Endothelial cell of umbilical vein (primary cell): ENCODE measurements at regions of chr3 and their contacts with region 1.

Region 1: DNA sequence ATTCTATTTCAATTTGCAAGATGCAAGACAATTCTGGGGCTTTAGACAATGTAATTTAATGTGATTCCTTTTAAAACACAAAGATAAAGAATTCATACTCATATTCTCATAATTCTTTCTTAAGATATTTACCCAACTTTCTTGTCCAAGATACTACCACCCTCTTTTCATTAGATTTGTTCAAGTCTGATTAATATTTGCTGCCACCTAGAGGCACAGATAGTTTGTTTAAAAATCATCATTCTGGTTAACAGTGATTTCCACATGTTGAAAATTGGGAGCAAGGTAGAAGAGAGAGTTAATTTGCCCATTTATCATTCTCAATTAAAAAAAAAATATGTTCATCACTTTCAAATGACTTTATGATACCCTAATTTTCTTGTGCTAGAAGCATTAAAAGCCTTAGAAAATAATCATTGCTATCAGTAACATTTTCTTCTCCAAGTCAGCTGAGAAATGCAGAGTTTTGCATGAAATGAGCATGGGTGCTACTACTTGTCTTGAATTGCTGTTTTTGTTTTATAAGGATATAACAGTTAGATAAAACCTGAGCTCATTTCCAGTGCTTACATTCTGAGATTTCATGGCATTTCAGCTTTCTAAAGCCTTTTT is 11.6 kb downstream of the TAMM41 start:
- DNase-seq: peak; percentile 49
- H3K4me3 ChIP-seq: no peak overlapping the region
- H3K27ac ChIP-seq: no peak overlapping the region
- H3K4me1 ChIP-seq: no peaks in the 10 kb centered on the region
- H3K27me3 ChIP-seq: no peaks in the 10 kb centered on the region
- CTCF ChIP-seq: peak; percentile 17 to 30
- POLR2A ChIP-seq: no peak

Region 2: GRCh38 chr3:11651900-11652299 is 183.2 kb before region 1 on chr3:
- CTCF ChIA-PET with region 1: interaction called, 3 read pairs
- POLR2A ChIA-PET with region 1: no interaction called
- dilution Hi-C with region 1: no loop called
- intact Hi-C with region 1: loop called (anchors 1 kb)
- DNase-seq: peak; percentile 62
- H3K4me3 ChIP-seq: no peak overlapping the region
- H3K27ac ChIP-seq: no peak overlapping the region
- H3K4me1 ChIP-seq: peaks cover 3% of the 10 kb centered on the region
- H3K27me3 ChIP-seq: no peaks in the 10 kb centered on the region
- CTCF ChIP-seq: peak in 1 of 2 donors; percentile 16
- POLR2A ChIP-seq: no peak

Region 3: GRCh38 chr3:11662402-11662990 is 172.6 kb before region 1 on chr3:
- CTCF ChIA-PET with region 1: interaction called, 5 read pairs
- POLR2A ChIA-PET with region 1: no interaction called
- dilution Hi-C with region 1: no loop called
- intact Hi-C with region 1: loop called (anchors 2 kb)
- DNase-seq: peak; percentile 31
- H3K4me3 ChIP-seq: no peak overlapping the region
- H3K27ac ChIP-seq: no peak overlapping the region
- H3K4me1 ChIP-seq: peaks cover 12% of the 10 kb centered on the region
- H3K27me3 ChIP-seq: no peaks in the 10 kb centered on the region
- CTCF ChIP-seq: peak; percentile 33 to 43
- POLR2A ChIP-seq: no peak

Region 4: GRCh38 chr3:11785024-11785377 is 50.1 kb before region 1 on chr3:
- CTCF ChIA-PET with region 1: no interaction called
- POLR2A ChIA-PET with region 1: no interaction called
- dilution Hi-C with region 1: no loop called
- intact Hi-C with region 1: no loop called
- DNase-seq: no peak
- H3K4me3 ChIP-seq: no peak overlapping the region
- H3K27ac ChIP-seq: no peak overlapping the region
- H3K4me1 ChIP-seq: no peaks in the 10 kb centered on the region
- H3K27me3 ChIP-seq: no peaks in the 10 kb centered on the region
- CTCF ChIP-seq: no peak
- POLR2A ChIP-seq: no peak

Region 5: DNA sequence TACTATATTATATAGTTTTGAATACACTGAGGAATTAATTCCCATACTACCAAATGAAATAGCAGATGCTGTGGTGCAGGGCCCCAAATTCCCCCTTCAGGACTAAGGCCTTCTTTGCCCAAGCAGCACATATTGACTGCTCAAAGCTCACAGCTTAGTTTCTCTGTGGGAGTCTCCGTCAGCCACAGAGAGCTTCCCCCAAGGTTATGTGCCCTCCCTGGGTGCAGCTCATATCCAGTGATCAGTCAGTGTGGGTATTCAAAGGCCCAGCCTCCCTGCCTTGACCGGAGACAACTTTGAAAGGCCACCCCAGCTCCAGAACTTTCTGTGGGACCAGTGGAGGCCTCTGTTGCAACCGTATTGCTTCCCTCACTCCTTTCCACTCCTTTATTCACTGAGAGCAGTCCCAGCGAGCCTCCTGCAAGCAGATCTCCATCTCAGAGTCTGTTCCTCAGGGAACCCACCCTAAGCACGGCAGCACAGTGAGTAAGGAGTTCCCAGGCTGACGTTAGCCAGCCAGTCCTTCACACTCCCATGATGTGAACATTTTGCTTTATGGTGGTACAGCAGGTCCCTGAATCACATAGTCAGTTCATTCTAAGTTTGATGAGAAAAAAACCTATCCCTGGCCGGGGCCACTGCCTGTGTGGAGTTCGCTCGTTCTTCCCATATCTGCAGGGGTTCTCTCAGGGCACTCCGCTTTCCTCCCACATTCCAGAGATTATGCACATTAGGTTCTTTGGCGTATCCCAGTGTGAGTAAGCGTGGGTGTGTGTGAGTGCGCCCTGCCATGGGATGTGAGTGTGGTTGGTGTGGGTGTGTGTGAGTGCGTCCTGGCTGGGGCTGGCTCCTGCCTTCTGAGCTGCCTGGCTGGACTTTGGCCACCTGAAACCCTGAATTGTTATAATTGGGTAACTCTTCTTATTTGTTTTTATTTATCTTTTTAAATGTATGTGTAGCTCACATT is 389.3 kb after region 1 on chr3:
- CTCF ChIA-PET with region 1: no interaction called
- POLR2A ChIA-PET with region 1: no interaction called
- dilution Hi-C with region 1: no loop called
- intact Hi-C with region 1: no loop called
- DNase-seq: no peak
- H3K4me3 ChIP-seq: no peak overlapping the region
- H3K27ac ChIP-seq: no peak overlapping the region
- H3K4me1 ChIP-seq: no peaks in the 10 kb centered on the region
- H3K27me3 ChIP-seq: peaks cover 2% of the 10 kb centered on the region in 2 experiments
- CTCF ChIP-seq: no peak
- POLR2A ChIP-seq: no peak